Transverse colon (tissue), 4 donors: ENCODE measurements at regions of chr18 and their contacts with region 1.

Region 1: DNA sequence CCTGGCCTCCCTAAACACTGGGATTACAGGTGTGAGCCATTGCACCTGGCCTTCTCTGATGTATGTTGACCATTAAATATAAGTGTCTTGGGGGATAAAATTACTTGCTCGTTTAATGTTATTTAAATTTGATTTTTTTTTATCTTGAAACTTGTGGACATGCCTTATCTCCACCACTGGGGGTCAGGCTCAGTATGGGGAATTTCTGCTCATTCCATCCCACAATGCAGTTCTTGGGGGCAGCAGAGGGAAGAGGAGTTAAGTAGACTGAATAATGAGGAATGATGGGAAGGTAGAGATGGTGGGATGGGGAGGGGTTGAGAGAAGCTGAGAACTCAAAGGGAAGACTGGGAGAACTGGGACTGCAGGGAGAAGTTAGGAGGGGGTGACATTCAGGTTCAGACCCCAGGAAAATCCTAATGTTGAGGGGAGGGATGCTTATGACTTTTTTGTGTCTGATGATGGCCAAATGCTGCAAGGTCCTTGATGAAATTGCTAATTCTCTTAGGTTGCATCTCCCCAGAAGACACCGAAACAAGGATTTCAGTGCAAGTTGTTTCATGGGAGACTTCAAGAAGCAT is 174.2 kb downstream of the MIB1 start:
- DNase-seq: peak; percentile 19
- H3K4me3 ChIP-seq: no peak overlapping the region
- H3K27ac ChIP-seq: no peak overlapping the region
- H3K4me1 ChIP-seq: peaks cover 0 to 8% (median 0%) of the 10 kb centered on the region in 4 donors
- H3K27me3 ChIP-seq: no peaks in the 10 kb centered on the region
- CTCF ChIP-seq: peak; percentile 34 to 64 (median 50)
- EP300 ChIP-seq: no peak
- POLR2A ChIP-seq: no peak

Region 2: DNA sequence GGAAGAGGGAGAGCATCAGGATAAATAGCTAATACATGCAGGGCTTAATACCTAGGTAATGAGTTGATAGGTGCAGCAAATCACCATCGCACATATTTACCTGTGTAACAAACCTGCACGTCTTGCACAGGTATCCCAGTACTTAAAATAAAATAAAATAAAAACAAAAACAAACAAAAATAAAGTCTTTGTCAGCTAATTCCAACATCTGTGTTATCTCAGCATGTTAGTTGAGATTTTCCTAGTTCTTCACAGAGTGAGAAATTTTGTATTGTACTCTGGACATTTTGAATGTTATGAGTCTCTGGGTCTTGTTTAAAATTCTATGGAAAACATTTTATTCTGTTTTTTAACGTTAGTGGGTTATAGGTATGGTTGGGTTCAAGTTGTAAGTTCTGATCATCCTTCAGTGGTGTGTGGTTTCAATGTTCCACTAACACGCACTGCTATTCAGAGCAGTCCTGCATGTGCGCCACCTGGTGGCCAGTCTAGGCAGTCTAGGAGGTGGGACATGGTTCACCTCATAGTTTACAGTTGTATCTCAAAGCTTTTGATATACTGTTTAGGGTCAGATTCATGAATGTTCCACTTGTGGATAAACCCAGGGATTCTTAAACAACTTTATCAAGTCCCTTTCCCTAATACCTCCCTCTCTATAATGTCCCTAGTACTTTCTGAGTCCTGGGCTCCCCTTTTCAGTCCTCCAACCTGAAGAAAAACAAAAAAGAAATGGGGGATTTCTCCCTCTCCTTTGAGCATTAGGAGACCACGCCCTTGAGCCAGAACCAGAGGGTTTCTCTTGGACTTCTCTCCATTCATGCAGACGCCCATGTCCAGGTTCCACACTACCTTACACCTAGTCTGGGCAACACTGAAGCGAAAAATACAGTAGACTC is 41.2 kb after region 1 on chr18:
- in situ Hi-C with region 1: no loop called
- intact Hi-C with region 1: no loop called
- DNase-seq: peak; percentile 85
- H3K4me3 ChIP-seq: no peak overlapping the region
- H3K27ac ChIP-seq: no peak overlapping the region
- H3K4me1 ChIP-seq: no peaks in the 10 kb centered on the region
- H3K27me3 ChIP-seq: no peaks in the 10 kb centered on the region
- CTCF ChIP-seq: peak; percentile 78 to 92 (median 90)
- EP300 ChIP-seq: no peak
- POLR2A ChIP-seq: no peak

Region 3: GRCh38 chr18:22363867-22364463 is 449.1 kb after region 1 on chr18:
- in situ Hi-C with region 1: loop called in 1 of 4 experiments (anchors 25 kb)
- intact Hi-C with region 1: no loop called
- DNase-seq: no peak
- H3K4me3 ChIP-seq: no peak overlapping the region
- H3K27ac ChIP-seq: no peak overlapping the region
- H3K4me1 ChIP-seq: no peaks in the 10 kb centered on the region
- H3K27me3 ChIP-seq: no peaks in the 10 kb centered on the region
- CTCF ChIP-seq: peak in 4 of 5 experiments; percentile 13 to 49 (median 31)
- EP300 ChIP-seq: no peak
- POLR2A ChIP-seq: no peak